Activated CD4-positive, alpha-beta memory T cell treated with anti-CD3 and anti-CD28 coated beads, Interleukin-2, amount 10 ng/mL, durations not matched to agents 7 days and 5 days (primary cell): ENCODE measurements at regions of chr10 and their contacts with region 1.

Region 1: DNA sequence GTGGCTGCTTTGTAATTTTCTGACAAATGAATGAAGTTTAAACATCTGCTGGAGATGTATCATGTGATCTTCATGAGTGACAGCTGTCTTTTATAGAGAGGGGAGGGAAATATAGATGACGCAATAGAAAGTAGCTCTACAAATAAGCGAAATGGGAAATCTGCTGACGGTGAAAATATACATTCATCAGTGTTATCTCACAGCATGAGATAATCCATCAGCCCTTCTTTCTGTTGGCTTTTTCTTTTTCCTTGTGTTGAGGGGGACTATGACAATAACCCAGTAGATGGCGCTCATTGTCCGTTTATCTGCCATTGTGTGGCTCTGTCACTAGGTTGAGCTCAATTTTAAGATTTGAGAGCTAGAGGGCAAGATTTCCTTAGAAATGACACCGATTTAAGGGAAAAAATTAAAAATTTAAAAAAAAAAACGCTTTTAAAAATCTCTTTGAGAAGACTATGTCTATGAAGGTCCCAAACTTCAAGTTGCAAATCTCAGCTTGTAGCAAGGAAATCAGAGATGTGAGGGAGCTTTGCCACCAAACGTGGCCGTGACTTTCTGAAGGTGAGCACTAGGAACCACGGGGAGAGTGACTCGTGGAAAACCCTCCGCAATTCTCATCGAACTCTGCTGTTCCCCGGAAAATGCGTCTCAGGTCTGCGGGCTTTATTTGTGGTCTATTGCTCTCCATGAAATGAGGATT is 114.6 kb upstream of the SFMBT2 start:
- DNase-seq: peak; percentile 66
- H3K4me3 Mint-ChIP-seq: no peak overlapping the region
- H3K27ac Mint-ChIP-seq: no peak overlapping the region
- H3K4me1 Mint-ChIP-seq: peaks cover 15% of the 10 kb centered on the region
- H3K27me3 Mint-ChIP-seq: peaks cover 15% of the 10 kb centered on the region

Region 2: GRCh38 chr10:7515439-7515838 is 10.0 kb before region 1 on chr10:
- CTCF ChIA-PET with region 1: interaction called, 18 read pairs
- POLR2A ChIA-PET with region 1: no interaction called
- DNase-seq: no peak
- H3K4me3 Mint-ChIP-seq: no peak overlapping the region
- H3K27ac Mint-ChIP-seq: no peak overlapping the region
- H3K4me1 Mint-ChIP-seq: peaks cover 20% of the 10 kb centered on the region
- H3K27me3 Mint-ChIP-seq: peaks cover 4% of the 10 kb centered on the region

Region 3: DNA sequence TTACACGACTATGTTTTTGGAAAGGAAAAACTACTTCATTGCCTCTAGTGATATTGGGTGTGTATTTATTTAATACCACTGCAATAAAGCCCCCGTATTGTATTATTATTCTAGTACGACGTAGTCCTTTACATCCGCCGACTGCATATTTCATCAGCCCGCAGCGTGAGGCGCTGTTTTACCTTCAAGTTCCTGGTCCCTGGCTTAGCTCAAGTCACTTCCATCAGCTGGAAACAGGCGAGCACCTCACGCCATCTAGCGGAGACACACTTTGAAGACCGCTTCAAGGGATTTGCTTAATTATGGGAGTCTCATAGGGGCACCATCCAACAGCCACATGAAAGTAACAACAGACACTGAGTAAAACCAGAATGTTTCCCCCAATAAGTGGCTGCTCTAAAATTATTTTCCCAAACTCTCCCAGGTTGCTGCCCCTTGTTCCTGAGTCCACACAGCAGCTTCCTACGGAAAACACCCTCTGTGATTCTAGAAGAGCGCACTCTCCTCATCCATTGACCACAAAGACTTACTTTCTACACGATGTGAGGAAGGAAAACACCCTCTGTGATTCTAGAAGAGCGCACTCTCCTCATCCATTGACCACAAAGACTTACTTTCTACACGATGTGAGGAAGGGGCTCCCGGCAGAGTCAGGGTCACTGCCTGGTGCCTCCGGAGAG is 161.9 kb after region 1 on chr10:
- CTCF ChIA-PET with region 1: interaction called, 97 read pairs
- POLR2A ChIA-PET with region 1: interaction called, 4 read pairs
- DNase-seq: peak; percentile 80
- H3K4me3 Mint-ChIP-seq: no peak overlapping the region
- H3K27ac Mint-ChIP-seq: no peak overlapping the region
- H3K4me1 Mint-ChIP-seq: peaks cover 10% of the 10 kb centered on the region
- H3K27me3 Mint-ChIP-seq: peaks cover 25% of the 10 kb centered on the region